Transverse colon (tissue), 4 donors: ENCODE measurements at regions of chr4 and their contacts with region 1.

Region 1: DNA sequence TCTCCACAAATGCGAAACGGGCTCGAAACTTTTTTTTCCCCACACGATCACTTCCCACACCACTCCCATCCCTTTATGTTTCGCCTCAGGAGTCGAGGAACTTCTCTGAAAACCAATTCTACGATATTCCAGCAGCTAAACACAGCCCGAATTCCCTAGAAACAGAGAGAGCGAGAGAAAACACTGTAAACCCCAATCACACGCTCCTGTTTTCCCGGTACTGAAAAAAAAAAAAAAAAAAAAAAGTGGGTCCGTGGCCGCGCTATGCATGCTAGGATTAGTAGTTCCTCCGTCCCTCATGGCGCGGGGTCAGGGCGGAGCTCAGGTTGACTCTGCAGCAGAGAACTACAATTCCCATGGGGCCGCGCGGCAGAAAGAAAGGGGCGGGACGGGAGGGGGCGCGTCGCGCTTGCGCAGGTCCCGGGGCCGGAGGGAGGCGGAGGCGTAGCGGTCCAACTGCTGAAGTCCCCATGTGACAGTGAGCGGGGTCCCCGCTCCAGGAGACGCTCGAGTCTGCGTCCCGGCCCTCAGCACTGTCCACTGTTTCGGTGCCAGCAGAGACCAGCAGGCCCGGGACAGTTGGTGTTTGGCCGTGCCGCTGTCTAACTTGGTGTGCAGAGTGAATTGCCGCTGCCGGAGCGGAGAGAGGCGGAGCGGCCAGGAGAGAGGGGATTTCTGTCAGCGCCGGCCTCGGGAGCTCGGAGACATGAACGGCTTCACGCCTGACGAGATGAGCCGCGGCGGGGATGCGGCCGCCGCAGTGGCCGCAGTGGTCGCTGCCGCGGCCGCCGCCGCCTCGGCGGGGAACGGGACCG is at the start of gene SAP30:
- DNase-seq: peak; percentile 98
- H3K4me3 ChIP-seq: peak within 1 kb of the TSS; percentile 66 to 99 (median 86)
- H3K27ac ChIP-seq: peak within 1 kb of the TSS; percentile 98 to 99 (median 98)
- H3K4me1 ChIP-seq: peaks cover 0 to 41% (median 6%) of the 10 kb centered on the region in 4 donors
- H3K27me3 ChIP-seq: no peaks in the 10 kb centered on the region
- CTCF ChIP-seq: no peak
- EP300 ChIP-seq: no peak
- POLR2A ChIP-seq: peak; percentile 95
- total RNA-seq, gene SAP30: 3.8 to 15.3 (median 14.7) TPM

Region 2: DNA sequence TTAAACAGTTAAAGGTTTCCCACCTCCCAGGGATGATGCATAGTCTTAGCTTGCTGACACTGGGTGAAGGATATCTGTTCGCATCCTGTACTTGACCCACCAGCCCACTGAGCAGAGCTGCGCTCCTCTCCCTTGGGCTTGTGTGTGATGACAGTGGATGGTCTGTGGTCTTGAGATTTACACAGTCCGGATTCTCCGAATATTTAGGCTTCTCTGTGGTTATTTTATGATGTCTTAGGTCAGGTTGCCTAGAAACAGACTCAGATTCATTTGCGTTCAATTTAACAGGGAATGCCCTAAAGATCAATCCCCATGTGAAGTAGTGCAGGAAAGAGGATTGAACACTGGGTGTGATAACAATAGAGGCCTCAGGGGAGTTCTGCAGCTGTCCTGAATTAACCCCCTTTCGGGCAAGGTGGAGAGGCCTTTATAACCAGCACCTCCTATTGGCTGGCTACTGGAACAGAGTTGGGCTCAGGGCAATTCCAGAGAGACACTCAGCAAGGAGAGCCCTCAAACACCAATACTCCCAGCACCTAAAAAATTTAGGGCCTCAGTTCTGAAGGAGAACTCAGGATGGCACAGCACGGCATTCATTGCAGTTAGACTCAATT is 855.3 kb before region 1 on chr4:
- in situ Hi-C with region 1: no loop called
- intact Hi-C with region 1: no loop called
- DNase-seq: no peak
- H3K4me3 ChIP-seq: no peak overlapping the region
- H3K27ac ChIP-seq: no peak overlapping the region
- H3K4me1 ChIP-seq: no peaks in the 10 kb centered on the region
- H3K27me3 ChIP-seq: no peaks in the 10 kb centered on the region
- CTCF ChIP-seq: no peak
- EP300 ChIP-seq: no peak
- POLR2A ChIP-seq: no peak

Region 3: GRCh38 chr4:173280998-173281397 is 89.7 kb before region 1 on chr4:
- in situ Hi-C with region 1: no loop called
- intact Hi-C with region 1: no loop called
- DNase-seq: no peak
- H3K4me3 ChIP-seq: no peak overlapping the region
- H3K27ac ChIP-seq: no peak overlapping the region
- H3K4me1 ChIP-seq: no peaks in the 10 kb centered on the region
- H3K27me3 ChIP-seq: no peaks in the 10 kb centered on the region
- CTCF ChIP-seq: no peak
- EP300 ChIP-seq: no peak
- POLR2A ChIP-seq: no peak

Region 4: GRCh38 chr4:173334085-173334772 is 36.5 kb before region 1 on chr4 and contains the start of gene HMGB2:
- in situ Hi-C with region 1: no loop called
- intact Hi-C with region 1: loop called (anchors 5 kb)
- DNase-seq: peak; percentile 100
- H3K4me3 ChIP-seq: peak within 1 kb of the TSS; percentile 62 to 97 (median 86)
- H3K27ac ChIP-seq: peak within 1 kb of the TSS; percentile 97 to 99 (median 98)
- H3K4me1 ChIP-seq: peaks cover 3 to 32% (median 19%) of the 10 kb centered on the region in 4 donors
- H3K27me3 ChIP-seq: no peaks in the 10 kb centered on the region
- CTCF ChIP-seq: no peak
- EP300 ChIP-seq: no peak
- POLR2A ChIP-seq: peak; percentile 99
- total RNA-seq, gene HMGB2: 9.4 to 34.9 (median 29.1) TPM

Region 5: DNA sequence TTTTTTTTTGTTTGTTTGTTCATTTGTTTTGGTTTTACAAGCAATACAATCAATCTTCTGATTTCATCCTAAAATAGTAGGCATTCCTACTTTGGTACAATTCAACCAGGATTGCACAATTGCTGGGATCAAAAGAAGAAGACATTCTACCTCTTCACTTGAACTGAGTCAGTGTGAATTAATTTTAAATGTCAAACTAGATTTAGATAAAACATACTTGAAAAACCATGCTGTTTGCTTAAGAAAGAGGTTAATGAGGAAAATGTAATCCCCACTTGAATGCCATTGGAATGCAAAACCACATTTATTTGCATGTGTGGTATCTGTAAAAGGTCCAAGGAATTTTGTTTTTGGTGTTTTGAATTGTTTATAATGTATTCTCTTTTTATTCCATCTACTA is 118.8 kb after region 1 on chr4:
- in situ Hi-C with region 1: no loop called
- intact Hi-C with region 1: no loop called
- DNase-seq: no peak
- H3K4me3 ChIP-seq: no peak overlapping the region
- H3K27ac ChIP-seq: peak overlapping the region in 1 of 4 donors; percentile 1
- H3K4me1 ChIP-seq: peaks cover 0 to 25% (median 4%) of the 10 kb centered on the region in 4 donors
- H3K27me3 ChIP-seq: peaks cover 2% of the 10 kb centered on the region
- CTCF ChIP-seq: no peak
- EP300 ChIP-seq: no peak
- POLR2A ChIP-seq: no peak